AG04449 (cell line): ENCODE measurements at regions of chr10 and their contacts with region 1.

Region 1: GRCh38 chr10:52644373-52645186 is 128.0 kb downstream of the MBL2 start:
- DNase-seq: no peak
- H3K4me3 ChIP-seq: no peak overlapping the region
- CTCF ChIP-seq: peak; percentile 64

Region 2: GRCh38 chr10:52451817-52452216 is 192.8 kb before region 1 on chr10:
- CTCF ChIA-PET with region 1: no interaction called
- POLR2A ChIA-PET with region 1: no interaction called
- DNase-seq: peak; percentile 44
- H3K4me3 ChIP-seq: no peak overlapping the region
- CTCF ChIP-seq: no peak

Region 3: DNA sequence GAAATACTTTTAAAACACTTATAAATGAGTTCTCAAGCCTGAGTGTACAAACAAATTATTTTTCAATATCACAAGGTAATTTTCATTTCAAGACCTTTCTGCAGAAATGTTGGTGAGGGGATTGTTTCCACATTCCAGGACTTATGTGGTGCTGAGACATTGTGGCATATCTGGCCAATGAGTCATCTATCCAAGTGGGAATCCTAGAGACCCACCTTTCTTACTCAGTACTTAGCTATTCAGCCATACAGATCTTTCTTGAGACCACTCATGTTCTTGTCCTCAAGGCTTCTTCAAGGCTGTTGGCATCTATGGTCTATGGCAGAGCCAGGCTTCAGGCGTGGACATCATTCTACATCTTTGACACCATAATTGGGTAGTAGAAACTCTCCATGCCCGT is 105.1 kb before region 1 on chr10:
- CTCF ChIA-PET with region 1: no interaction called
- POLR2A ChIA-PET with region 1: no interaction called
- DNase-seq: no peak
- H3K4me3 ChIP-seq: no peak overlapping the region
- CTCF ChIP-seq: no peak

Region 4: DNA sequence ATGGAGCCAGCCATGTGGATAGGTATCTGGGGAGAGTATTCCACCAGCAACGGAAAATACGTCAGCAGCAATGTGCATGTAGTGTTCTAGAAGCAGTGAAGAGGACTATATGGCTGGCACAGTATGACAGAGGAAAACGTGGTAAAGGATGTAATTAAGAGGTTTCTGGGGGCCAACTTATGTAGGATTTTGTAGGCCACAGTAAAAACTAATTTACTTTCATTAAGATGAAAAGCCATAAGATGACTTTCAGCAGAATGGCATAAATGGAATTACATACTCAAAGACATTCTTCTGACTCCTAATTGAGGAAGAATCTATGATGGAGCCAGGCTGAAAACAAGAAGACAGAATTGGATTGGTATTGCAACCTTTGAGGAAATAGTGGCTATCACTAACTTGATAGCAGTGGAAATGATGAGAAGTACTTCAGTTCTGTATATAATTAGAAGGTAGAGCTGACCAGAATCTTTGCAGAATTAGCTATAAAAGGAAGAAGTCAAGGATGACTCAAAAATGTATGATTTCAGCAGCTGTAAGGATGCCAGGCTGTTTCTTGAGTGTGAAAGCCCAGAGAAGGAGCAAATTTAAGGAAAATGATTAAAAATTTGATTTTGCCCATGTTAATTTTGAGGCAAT is 28.7 kb before region 1 on chr10:
- CTCF ChIA-PET with region 1: interaction called, 16 read pairs
- POLR2A ChIA-PET with region 1: no interaction called
- DNase-seq: no peak
- H3K4me3 ChIP-seq: no peak overlapping the region
- CTCF ChIP-seq: no peak

Region 5: GRCh38 chr10:52677086-52677485 is 32.5 kb after region 1 on chr10:
- CTCF ChIA-PET with region 1: interaction called, 14 read pairs
- POLR2A ChIA-PET with region 1: no interaction called
- DNase-seq: no peak
- H3K4me3 ChIP-seq: no peak overlapping the region
- CTCF ChIP-seq: no peak

Region 6: GRCh38 chr10:52729271-52730104 is 84.9 kb after region 1 on chr10:
- CTCF ChIA-PET with region 1: interaction called, 208 read pairs
- POLR2A ChIA-PET with region 1: no interaction called
- DNase-seq: no peak
- H3K4me3 ChIP-seq: no peak overlapping the region
- CTCF ChIP-seq: peak; percentile 42

Region 7: GRCh38 chr10:52746169-52746568 is 101.6 kb after region 1 on chr10:
- CTCF ChIA-PET with region 1: interaction called, 112 read pairs
- POLR2A ChIA-PET with region 1: no interaction called
- DNase-seq: no peak
- H3K4me3 ChIP-seq: no peak overlapping the region
- CTCF ChIP-seq: peak; percentile 47

Region 8: GRCh38 chr10:52779541-52780390 is 135.2 kb after region 1 on chr10:
- CTCF ChIA-PET with region 1: interaction called, 135 read pairs
- POLR2A ChIA-PET with region 1: no interaction called
- DNase-seq: no peak
- H3K4me3 ChIP-seq: no peak overlapping the region
- CTCF ChIP-seq: peak; percentile 90